ENCODE measurements at regions of chr7 and their contacts with region 1.

Region 1: DNA sequence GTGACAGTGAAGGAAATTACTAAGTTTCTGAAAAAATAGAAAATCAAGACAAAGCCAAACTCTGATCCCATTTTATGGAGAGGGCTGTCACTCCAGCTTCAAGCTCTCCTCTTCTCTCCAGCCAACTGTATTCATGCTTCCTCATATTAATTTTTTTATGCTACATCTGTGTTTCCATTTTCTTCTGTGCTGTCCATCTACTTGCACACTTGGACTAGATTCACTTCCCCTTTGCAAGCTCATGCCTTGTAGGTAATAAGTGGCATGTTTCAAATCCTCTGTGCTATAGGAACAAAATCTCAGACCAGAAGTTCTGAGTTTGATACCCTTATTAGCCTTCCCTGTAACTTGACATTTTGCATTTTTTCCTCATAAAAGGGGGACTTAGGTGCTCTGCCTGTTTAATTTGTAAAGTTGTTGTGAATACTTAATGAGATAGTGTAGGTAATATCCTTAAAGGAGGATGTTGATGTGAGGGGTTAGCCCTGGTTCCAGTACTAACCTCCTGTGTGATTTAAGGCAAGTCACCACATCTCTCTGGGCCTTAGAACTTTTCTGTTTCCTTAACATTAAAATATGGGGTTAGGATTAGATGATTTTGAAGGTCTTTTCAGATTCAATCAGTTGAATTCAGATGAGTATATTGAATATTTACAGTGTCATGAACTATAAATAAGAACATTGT is 358.8 kb downstream of the BBS9 start:
- DNase-seq: no peak
- ATAC-seq: no peak

Region 2: DNA sequence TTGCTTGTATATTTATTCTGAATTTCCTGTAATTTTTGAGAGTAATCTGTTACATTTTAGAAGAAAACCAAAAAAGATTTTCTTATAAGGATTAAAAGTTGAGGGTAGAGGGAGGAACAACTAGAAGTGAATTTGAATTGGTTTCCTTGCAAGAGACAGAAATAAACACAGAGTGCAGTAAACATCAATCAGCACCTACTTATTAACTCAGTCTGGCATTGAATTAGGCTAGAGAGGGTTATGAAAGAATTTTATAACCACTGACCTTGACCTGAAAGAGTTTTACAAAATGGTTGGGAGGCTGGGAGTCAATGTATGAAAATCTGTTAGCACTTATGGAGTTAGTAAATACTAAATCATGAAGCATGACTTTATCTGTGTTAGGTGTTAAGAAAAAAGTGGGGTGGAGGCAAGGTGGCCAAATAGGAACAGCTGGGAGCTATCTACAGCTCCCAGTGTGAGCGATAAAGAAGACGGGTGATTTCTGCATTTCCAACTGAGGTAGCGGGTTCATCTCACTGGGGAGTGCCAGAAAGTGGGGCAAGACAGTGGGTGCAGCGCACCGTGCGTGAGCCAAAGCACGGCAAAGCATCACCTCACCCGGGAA is 1524.5 kb before region 1 on chr7:
- intact Hi-C with region 1: no loop called
- DNase-seq: no peak
- ATAC-seq: no peak

Region 3: GRCh38 chr7:32239764-32240163 is 1248.4 kb before region 1 on chr7:
- intact Hi-C with region 1: no loop called
- DNase-seq: no peak
- ATAC-seq: no peak

Region 4: DNA sequence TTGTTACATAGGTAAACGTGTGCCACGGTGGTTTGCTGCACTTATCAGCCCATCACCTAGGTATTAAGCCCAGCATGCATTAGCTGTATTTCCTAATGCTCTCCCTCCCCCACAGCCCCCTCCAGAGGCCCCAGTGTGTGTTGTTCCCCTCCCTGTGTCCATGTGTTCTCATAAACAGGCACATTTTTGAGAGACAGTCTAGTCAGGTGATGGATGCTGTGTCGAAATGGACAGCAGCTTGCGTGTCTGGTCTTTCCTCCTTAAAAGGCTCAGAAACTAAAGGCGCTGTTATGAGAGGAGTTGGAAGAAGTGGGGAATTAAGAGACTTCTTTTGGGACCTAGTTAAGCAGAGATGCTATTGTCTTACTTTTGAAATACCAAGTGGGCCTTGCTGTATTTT is 62.7 kb before region 1 on chr7:
- intact Hi-C with region 1: no loop called
- DNase-seq: no peak
- ATAC-seq: no peak

Region 5: GRCh38 chr7:33459340-33459751 is 28.8 kb before region 1 on chr7:
- intact Hi-C with region 1: loop called (anchors 2 kb)
- DNase-seq: no peak
- ATAC-seq: peak; percentile 79